ENCODE measurements at regions of chr3 and their contacts with region 1.

Region 1: DNA sequence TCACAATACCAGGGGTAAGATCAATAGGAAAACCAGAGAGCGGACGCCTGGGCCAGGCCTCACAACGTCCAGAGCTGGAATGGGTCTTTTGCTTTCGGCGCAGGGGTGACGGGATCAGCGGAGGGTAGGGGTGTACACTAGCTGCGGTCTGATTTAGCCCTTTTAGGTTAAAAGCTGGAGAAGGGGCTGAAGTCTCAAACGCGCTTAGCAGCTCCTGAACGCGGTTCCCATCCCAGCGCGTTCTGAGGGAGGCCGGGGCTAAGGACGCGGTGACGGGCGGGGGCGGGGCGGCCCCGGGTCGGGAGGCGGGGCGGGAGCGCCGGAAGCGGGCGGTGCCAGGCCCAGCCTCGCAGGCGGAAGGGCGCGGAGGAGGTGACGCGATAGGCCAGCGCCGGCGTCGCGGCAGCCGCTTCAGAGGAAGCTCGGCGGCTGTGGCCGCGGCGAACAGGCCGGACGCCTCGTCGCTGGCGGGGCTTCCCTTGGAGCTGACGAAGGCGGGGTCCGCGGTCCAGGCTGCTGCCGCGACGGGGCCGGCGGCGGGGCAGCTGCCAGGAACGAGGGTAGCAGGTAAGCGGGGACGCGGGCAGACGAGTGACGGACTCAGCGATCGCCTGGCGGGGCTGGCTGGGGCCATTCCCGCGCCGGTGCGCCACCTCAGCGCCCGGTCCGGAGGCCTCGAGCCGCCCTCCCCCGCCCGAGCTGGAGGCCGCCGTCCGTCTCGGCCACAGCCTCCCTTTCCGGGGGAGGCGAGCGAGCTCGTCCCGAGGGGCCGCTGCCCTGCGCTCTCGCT is at the start of gene SENP5:
- DNase-seq: peak; percentile 80 to 94
- H3K4me3 ChIP-seq: peak within 1 kb of the TSS; percentile 76 to 99
- H3K27ac ChIP-seq: peak within 1 kb of the TSS; percentile 88 to 95
- H3K4me1 ChIP-seq: peaks cover 0 to 38% (median 21%) of the 10 kb centered on the region in 4 donors
- H3K27me3 ChIP-seq: no peaks in the 10 kb centered on the region
- CTCF ChIP-seq: no peak

Region 2: GRCh38 chr3:196942226-196942914 is 74.7 kb after region 1 on chr3 and contains the start of gene NCBP2:
- intact Hi-C with region 1: loop called (anchors 5 kb)
- DNase-seq: peak; percentile 98 to 99
- H3K4me3 ChIP-seq: peak within 1 kb of the TSS; percentile 70 to 94
- H3K27ac ChIP-seq: peak within 1 kb of the TSS; percentile 85 to 92
- H3K4me1 ChIP-seq: peaks cover 0 to 34% (median 27%) of the 10 kb centered on the region in 4 donors
- H3K27me3 ChIP-seq: no peaks in the 10 kb centered on the region
- CTCF ChIP-seq: peak; percentile 53 to 64